ENCODE measurements at regions of chr16 and their contacts with region 1.

Region 1: GRCh38 chr16:20763461-20764232 is at the start of gene ACSM3:
- DNase-seq: peak; percentile 34 to 88 (median 66)
- ATAC-seq: peak; percentile 98
- H3K4me3 ChIP-seq: peak within 1 kb of the TSS; percentile 51 to 58
- H3K4me3 Mint-ChIP-seq: peak within 1 kb of the TSS; percentile 96
- H3K27ac ChIP-seq: peak within 1 kb of the TSS; percentile 47 to 78
- H3K27ac Mint-ChIP-seq: peak within 1 kb of the TSS; percentile 95
- H3K4me1 ChIP-seq: peaks cover 20% of the 10 kb centered on the region
- H3K4me1 Mint-ChIP-seq: peaks cover 37% of the 10 kb centered on the region
- H3K27me3 ChIP-seq: no peaks in the 10 kb centered on the region
- H3K27me3 Mint-ChIP-seq: no peaks in the 10 kb centered on the region
- CTCF ChIP-seq: no peak
- total RNA-seq, gene ACSM3: 5.4 to 6.6 TPM

Region 2: DNA sequence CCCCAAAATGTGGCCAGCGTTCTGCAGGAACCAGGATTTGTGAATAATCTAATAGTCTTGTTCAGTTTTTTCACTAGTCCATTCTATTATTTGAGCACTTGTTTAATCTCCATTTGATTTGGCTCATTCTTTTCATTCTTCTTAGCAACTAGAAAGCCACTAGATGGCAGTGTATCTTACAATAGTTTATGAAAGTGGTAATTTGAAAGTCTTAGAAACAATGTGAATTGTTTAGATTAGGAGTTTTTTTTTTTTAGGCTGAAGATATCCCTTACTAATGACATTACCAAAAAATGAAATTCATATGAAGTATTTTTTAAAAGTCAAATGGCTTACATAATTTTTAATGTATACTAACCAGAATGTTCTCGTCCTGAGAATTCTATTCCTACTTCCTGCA is 36.0 kb after region 1 on chr16:
- CTCF ChIA-PET with region 1: interaction called, 4 read pairs
- POLR2A ChIA-PET with region 1: no interaction called
- intact Hi-C with region 1: loop called in 1 of 2 experiments (anchors 2 kb)
- DNase-seq: peak in 1 of 9 experiments; percentile 14
- ATAC-seq: no peak
- H3K4me3 ChIP-seq: no peak overlapping the region
- H3K4me3 Mint-ChIP-seq: no peak overlapping the region
- H3K27ac ChIP-seq: no peak overlapping the region
- H3K27ac Mint-ChIP-seq: no peak overlapping the region
- H3K4me1 ChIP-seq: peaks cover 7% of the 10 kb centered on the region
- H3K4me1 Mint-ChIP-seq: peaks cover 15% of the 10 kb centered on the region
- H3K27me3 ChIP-seq: no peaks in the 10 kb centered on the region
- H3K27me3 Mint-ChIP-seq: no peaks in the 10 kb centered on the region
- CTCF ChIP-seq: peak; percentile 48

Region 3: DNA sequence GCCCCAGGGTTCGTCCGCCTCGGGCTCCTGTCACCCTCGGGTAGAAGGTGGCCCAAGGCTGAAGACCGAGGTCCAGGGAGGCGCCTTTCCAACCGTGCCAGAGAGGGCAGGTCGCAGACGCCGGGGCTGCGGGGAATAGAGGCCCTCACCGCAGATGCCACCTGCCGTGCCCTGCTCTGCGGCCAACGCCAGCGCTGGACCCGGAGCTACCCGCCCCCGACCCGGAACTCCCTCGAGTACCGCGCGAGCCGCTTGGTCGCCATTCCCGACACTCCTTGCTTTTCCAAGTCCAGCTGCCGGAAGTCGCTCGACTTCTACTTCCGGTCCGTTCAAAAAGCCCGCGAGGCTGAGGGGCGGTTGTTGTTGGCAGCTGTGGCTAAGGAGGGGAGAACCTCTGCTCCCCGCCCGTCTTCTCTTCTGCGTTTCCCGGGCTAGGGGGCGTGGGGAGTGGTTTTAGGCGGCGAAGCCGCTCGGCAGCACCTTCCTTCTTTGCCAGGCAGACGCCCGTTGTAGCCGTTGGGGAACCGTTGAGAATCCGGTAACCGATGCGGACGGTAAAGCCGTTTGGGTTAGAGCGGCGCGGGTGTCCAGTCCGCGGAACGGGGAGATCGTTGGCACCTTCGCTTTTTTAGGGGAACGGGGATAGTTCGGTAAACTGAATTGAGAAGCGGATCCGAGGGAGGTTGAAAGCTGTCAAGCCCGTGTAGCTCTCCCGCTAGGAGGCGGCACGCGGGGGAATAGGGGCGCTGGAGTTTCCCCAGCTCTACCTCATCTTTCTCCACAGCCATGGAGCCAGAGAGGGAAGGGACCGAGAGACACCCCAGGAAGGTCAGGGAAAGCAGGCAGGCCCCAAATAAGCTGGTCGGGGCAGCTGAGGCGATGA is 42.8 kb after region 1 on chr16 and contains the starts of genes ERI2 and REXO5:
- CTCF ChIA-PET with region 1: interaction called, 3 read pairs
- POLR2A ChIA-PET with region 1: no interaction called
- intact Hi-C with region 1: loop called in 1 of 2 experiments (anchors 2 kb)
- DNase-seq: peak; percentile 43 to 85 (median 74)
- ATAC-seq: peak; percentile 91
- H3K4me3 ChIP-seq: peak within 1 kb of the TSS; percentile 75 to 77
- H3K4me3 Mint-ChIP-seq: peak within 1 kb of the TSS; percentile 98
- H3K27ac ChIP-seq: peak within 1 kb of the TSS; percentile 42 to 77
- H3K27ac Mint-ChIP-seq: peak within 1 kb of the TSS; percentile 82
- H3K4me1 ChIP-seq: peaks cover 10% of the 10 kb centered on the region
- H3K4me1 Mint-ChIP-seq: peaks cover 18% of the 10 kb centered on the region
- H3K27me3 ChIP-seq: no peaks in the 10 kb centered on the region
- H3K27me3 Mint-ChIP-seq: no peaks in the 10 kb centered on the region
- CTCF ChIP-seq: peak; percentile 21
- total RNA-seq, gene ERI2: 0.14 TPM in 1 of 2 experiments, not detected in the other
- total RNA-seq, gene REXO5: 0.38 to 0.42 TPM

Region 4: GRCh38 chr16:21033704-21034103 is 270.1 kb after region 1 on chr16:
- CTCF ChIA-PET with region 1: no interaction called
- POLR2A ChIA-PET with region 1: no interaction called
- intact Hi-C with region 1: no loop called
- DNase-seq: no peak
- ATAC-seq: no peak
- H3K4me3 ChIP-seq: no peak overlapping the region
- H3K4me3 Mint-ChIP-seq: no peak overlapping the region
- H3K27ac ChIP-seq: no peak overlapping the region
- H3K27ac Mint-ChIP-seq: no peak overlapping the region
- H3K4me1 ChIP-seq: no peaks in the 10 kb centered on the region
- H3K4me1 Mint-ChIP-seq: no peaks in the 10 kb centered on the region
- H3K27me3 ChIP-seq: no peaks in the 10 kb centered on the region
- H3K27me3 Mint-ChIP-seq: peaks cover 3% of the 10 kb centered on the region
- CTCF ChIP-seq: no peak

Region 5: DNA sequence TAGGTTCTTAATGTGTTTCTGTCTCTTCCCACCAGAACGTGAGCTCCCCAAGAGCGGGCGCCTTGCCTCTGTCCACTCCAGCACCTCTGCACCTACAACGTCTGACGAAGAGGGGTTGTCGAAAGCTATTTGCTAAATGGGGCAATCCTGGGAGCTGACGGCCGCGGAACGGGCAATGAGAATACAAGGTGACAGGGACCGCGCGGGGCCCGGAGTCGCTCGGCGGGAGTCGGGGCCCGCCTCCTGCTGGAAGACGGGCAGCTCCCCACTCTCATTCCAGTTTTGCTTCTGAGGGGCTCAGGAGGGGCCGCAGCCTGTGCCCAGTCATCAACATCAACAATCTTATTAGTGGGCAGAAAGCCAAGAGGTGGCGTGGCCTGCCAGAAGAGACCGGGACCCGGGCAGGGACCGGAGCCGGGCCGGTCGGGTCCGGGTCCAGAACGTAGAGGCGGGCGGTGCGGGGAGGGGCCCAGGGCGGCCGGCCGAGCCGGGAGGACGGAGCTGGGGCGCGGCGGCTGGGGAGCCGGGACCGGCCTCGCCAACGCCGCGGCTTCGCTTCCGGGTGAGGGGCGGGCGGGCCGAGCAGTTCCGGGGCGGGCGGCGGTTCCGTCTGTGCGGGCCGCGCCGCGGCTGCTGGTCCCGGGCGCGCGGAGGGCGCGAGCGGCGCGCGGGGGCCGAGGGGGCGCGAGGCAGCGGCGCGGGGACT is 1244.0 kb after region 1 on chr16 and contains the start of gene MOSMO:
- CTCF ChIA-PET with region 1: no interaction called
- POLR2A ChIA-PET with region 1: no interaction called
- intact Hi-C with region 1: loop called in 1 of 2 experiments (anchors 10 kb)
- DNase-seq: peak; percentile 30 to 81 (median 67)
- ATAC-seq: peak; percentile 84
- H3K4me3 ChIP-seq: peak within 1 kb of the TSS; percentile 93 to 95
- H3K4me3 Mint-ChIP-seq: peak within 1 kb of the TSS; percentile 88
- H3K27ac ChIP-seq: peak within 1 kb of the TSS; percentile 70 to 75
- H3K27ac Mint-ChIP-seq: peak within 1 kb of the TSS; percentile 88
- H3K4me1 ChIP-seq: peaks cover 24% of the 10 kb centered on the region
- H3K4me1 Mint-ChIP-seq: peaks cover 46% of the 10 kb centered on the region
- H3K27me3 ChIP-seq: no peaks in the 10 kb centered on the region
- H3K27me3 Mint-ChIP-seq: no peaks in the 10 kb centered on the region
- CTCF ChIP-seq: no peak
- total RNA-seq, gene MOSMO: 2.4 TPM

Measured in CD8-positive, alpha-beta T cell (primary cell).